ENCODE measurements at regions of chr16 and their contacts with region 1.

Region 1: DNA sequence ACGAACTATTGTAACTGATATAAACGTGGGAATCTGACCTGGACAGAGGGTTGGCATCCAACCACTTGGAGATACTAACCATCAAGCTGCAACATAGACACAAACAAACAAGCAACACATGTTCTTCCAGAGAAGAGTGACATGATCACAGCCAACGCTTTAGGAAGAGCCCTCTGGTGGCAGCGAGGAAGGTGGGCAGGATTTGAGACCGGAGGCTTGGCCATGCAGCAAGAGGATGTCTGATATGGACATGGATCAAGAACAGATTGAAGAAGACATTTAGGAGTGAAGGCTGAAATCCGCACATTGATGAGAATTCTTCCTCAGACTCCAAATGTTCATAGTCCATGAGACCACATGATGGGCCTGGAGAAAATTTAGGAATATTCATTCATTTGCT is 40.3 kb upstream of the TNRC6A start:
- DNase-seq: no peak
- ATAC-seq: peak; percentile 50

Region 2: DNA sequence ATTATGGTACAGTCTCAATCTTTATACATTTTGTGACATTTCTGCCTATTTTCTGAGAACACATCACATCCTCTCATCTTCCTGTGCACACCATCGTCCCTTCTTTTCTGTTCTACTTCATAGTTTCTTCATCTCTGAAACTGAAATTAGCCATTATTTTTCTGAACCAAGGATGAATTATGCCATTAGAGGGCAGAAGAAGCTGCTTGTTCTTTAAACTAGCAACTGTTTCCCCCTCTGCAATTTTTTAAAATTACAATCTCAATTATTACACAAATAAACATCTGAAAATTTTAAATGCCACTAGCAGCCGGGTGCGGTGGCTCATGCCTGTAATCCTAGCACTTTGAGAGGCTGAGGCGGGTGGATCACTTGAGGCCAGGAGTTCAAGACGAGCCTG is 108.5 kb before region 1 on chr16:
- intact Hi-C with region 1: loop called (anchors 10 kb)
- DNase-seq: no peak
- ATAC-seq: no peak

Region 3: DNA sequence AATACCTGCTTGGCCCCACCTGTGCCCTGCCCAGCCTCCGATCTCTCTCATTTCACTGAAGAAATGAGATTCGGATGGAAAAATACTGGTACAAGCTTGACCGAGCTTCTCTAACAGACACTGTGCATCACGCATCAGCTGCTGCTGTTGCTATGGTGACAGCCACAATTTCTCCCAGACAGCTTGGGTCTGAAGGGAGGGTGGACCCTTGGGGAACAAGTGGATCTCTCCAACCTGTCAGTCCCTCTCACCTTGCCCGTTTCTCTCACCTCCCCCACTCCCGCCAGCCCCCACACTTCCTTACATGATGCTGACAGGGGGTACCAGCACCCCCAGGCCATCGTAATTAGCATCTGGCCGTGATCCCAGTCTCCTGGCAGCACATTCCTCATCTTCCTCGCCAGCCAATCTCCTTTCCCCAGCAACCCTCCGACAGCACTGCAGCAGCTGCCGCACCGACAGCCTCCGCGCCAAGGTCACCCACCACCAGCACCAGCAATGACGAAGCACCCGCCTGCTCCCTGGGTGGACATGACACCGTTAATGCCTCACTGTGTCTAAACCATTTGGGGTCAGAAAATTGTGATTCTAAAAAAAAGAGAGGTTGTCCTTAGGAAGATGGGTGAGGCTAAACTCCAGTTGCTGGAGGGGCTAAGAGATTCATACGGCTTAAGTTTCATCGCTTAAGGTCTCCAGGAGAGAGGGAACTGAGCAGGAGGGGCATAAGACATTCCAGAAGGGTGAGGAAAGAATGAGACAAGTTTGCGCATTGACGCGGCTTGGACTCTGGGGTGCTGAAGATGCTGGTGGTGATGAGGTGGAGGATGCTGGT is 18.3 kb before region 1 on chr16:
- intact Hi-C with region 1: no loop called
- DNase-seq: peak; percentile 73
- ATAC-seq: peak; percentile 75

Region 4: DNA sequence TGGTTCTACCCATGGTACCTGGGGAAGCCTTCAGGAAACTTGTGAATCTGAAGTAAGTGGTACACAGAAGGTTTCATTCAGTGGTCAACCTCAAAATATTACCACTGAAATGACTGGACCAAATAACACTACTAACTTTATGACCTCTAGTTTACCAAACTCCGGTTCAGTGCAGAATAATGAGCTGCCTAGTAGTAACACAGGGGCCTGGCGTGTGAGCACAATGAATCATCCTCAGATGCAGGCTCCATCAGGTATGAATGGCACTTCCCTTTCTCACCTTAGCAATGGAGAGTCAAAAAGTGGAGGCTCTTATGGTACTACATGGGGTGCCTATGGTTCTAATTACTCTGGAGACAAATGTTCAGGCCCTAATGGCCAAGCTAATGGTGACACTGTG is 100.7 kb after region 1 on chr16:
- intact Hi-C with region 1: no loop called
- DNase-seq: no peak
- ATAC-seq: no peak